ENCODE measurements at regions of chr6 and their contacts with region 1.

Region 1: GRCh38 chr6:147244832-147245231 is 40.6 kb downstream of the STXBP5 start:
- DNase-seq: no peak
- ATAC-seq: no peak
- H3K4me3 ChIP-seq: no peak overlapping the region
- H3K27ac ChIP-seq: no peak overlapping the region
- H3K4me1 ChIP-seq: no peaks in the 10 kb centered on the region; the same call in 1 of the 2 replicates
- H3K27me3 ChIP-seq: no peaks in the 10 kb centered on the region
- CTCF ChIP-seq: no peak
- POLR2A ChIP-seq: no peak
- RAD21 ChIP-seq: no peak

Region 2: DNA sequence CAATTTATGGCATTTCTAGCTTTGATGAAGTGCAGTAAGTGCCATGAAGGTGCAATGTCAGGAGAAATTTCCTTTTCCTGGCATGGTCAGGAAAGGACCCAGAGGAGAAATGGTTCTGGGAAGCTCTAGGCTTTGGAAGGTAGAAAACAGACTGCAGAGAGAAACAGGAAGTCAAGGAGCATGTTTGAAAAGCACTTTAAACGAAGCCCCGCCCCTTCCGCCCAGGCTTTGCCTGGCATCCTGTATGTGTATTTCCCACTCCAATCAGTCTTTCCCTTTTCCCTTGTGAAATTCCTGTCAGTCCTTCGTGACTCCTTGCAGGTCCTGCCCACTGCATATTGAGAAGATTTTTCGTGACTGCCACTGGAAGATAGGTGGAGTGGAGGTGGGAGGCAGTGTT is 776.9 kb after region 1 on chr6:
- CTCF ChIA-PET with region 1: no interaction called
- POLR2A ChIA-PET with region 1: no interaction called
- dilution Hi-C with region 1: no loop called
- in situ Hi-C with region 1: no loop called
- intact Hi-C with region 1: loop called (anchors 5 kb)
- DNase-seq: no peak
- ATAC-seq: no peak
- H3K4me3 ChIP-seq: no peak overlapping the region
- H3K27ac ChIP-seq: no peak overlapping the region
- H3K4me1 ChIP-seq: no peaks in the 10 kb centered on the region
- H3K27me3 ChIP-seq: no peaks in the 10 kb centered on the region
- CTCF ChIP-seq: no peak
- POLR2A ChIP-seq: no peak
- RAD21 ChIP-seq: no peak

Measured in IMR-90 (cell line).